Activated T-helper 1 cell treated with anti-CD3 and anti-CD28 coated beads, Interleukin-12 subunit alpha, Interleukin-12 subunit beta, Interleukin-2, Interleukin-4 antibody, amounts not matched to agents 30 ng/mL and 10 ng/mL and 1 ng/mL, durations not matched to agents 14 hours and 24 hours and 36 hours (primary cell): ENCODE measurements at regions of chr4 and their contacts with region 1.

Region 1: GRCh38 chr4:98625399-98625798 is 33.0 kb downstream of the TSPAN5 start:
- DNase-seq: no peak
- H3K4me3 Mint-ChIP-seq: no peak overlapping the region
- H3K27ac Mint-ChIP-seq: peak overlapping the region; percentile 10
- H3K4me1 Mint-ChIP-seq: peaks cover 72% of the 10 kb centered on the region
- H3K27me3 Mint-ChIP-seq: no peaks in the 10 kb centered on the region

Region 2: GRCh38 chr4:98609934-98610333 is 15.5 kb before region 1 on chr4:
- intact Hi-C with region 1: loop called (anchors 2 kb)
- DNase-seq: no peak
- H3K4me3 Mint-ChIP-seq: no peak overlapping the region
- H3K27ac Mint-ChIP-seq: no peak overlapping the region
- H3K4me1 Mint-ChIP-seq: peaks cover 76% of the 10 kb centered on the region
- H3K27me3 Mint-ChIP-seq: no peaks in the 10 kb centered on the region

Region 3: GRCh38 chr4:98639523-98639922 is 14.1 kb after region 1 on chr4:
- intact Hi-C with region 1: loop called (anchors 2 kb)
- DNase-seq: no peak
- H3K4me3 Mint-ChIP-seq: peak overlapping the region; percentile 79
- H3K27ac Mint-ChIP-seq: peak overlapping the region; percentile 90
- H3K4me1 Mint-ChIP-seq: peaks cover 58% of the 10 kb centered on the region
- H3K27me3 Mint-ChIP-seq: no peaks in the 10 kb centered on the region

Region 4: GRCh38 chr4:98688411-98689290 is 63.3 kb after region 1 on chr4:
- intact Hi-C with region 1: no loop called
- DNase-seq: no peak
- H3K4me3 Mint-ChIP-seq: no peak overlapping the region
- H3K27ac Mint-ChIP-seq: peak overlapping the region; percentile 40
- H3K4me1 Mint-ChIP-seq: peaks cover 19% of the 10 kb centered on the region
- H3K27me3 Mint-ChIP-seq: no peaks in the 10 kb centered on the region

Region 5: DNA sequence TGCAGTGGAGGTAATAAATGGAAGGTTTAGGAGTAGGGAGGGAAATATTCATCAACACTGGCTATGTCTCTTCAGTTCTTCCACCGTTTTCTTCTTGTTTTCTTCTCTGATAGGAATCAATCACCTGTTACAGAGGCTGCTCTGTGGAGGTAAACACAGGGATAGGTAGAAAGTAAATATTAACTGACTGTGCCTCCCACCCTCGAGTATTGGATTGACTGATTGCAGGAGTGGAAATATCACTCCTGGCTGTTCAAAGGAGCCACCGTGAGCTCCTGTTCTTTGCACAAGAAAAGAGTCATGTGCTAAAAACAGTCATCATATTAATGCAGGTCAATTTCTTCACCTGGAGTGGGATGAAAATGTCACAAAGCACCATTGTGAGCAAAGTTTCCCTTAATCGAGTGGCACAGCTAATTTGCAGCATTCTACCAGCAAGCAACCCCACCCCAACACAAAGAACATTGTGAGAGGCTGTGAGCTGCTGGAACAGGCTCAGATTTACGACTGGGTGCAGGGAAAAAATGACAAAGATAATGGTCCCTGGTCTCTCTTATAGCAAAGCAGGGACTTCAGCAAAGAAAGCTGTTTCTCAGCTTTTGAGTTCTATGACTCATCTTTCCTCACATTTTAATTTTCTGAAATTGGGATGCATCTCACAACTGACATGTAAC is 146.7 kb after region 1 on chr4:
- intact Hi-C with region 1: no loop called
- DNase-seq: no peak
- H3K4me3 Mint-ChIP-seq: no peak overlapping the region
- H3K27ac Mint-ChIP-seq: no peak overlapping the region
- H3K4me1 Mint-ChIP-seq: no peaks in the 10 kb centered on the region
- H3K27me3 Mint-ChIP-seq: peaks cover 7% of the 10 kb centered on the region